Activated CD4-positive, alpha-beta T cell treated with anti-CD3 and anti-CD28 coated beads, Interleukin-2, amount 10 ng/mL, durations not matched to agents 24 days and 14 days (primary cell): ENCODE measurements at regions of chr7 and their contacts with region 1.

Region 1: DNA sequence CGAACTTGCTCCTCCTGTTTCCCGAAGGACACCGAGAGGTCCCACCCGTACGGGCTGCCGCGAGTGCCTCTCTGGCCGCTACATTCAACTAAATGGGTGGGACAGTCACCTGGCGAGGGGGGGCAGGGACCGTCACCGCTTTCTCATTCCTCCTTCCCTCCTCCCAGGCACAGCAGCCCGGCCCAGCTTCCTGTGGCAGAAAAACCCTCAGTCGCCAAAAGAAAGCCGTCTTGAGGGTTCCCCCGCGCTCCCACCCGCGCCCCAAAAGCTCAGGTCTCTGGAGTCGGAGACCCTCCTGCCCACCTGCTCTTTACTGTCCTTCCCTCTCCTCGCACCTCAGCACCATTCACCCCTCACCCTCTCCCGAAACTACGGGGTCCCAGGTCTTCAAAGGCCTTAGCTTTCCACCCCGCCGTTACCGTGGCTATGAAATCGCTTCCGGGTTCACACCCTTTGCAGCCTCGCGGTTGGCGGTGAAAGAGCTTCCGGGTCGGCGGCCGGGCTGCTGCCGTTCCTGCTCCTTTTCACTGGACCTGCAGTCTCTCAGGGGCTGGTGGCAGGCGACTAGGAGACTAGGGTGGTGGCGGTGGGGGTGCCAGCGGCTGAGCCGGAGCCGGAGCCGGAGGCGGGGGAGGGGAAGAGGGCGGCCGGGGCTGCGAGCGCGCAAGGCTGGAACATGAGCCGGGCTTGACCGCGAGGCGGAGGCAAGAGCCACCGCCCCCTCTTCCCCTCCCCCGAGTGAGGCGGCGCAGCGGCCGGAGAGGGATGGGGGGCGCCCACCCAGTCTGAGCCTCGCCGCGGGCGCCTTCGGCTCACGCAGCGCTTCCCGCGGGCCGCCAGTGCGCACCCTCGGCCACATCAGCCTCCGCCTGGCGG is at the starts of genes ANKIB1 and KRIT1:
- DNase-seq: peak; percentile 96
- H3K4me3 Mint-ChIP-seq: peak within 1 kb of the TSS; percentile 98
- H3K27ac Mint-ChIP-seq: peak within 1 kb of the TSS; percentile 99
- H3K4me1 Mint-ChIP-seq: peaks cover 32% of the 10 kb centered on the region
- H3K27me3 Mint-ChIP-seq: no peaks in the 10 kb centered on the region
- total RNA-seq, gene ANKIB1: 54.3 and 55.7 TPM in 2 replicates
- total RNA-seq, gene KRIT1: 47.3 and 49.2 TPM in 2 replicates

Region 2: GRCh38 chr7:91940572-91941341 is 305.0 kb before region 1 on chr7 and contains the start of gene AKAP9:
- intact Hi-C with region 1: loop called (anchors 2 kb)
- DNase-seq: peak; percentile 97
- H3K4me3 Mint-ChIP-seq: peak within 1 kb of the TSS; percentile 89
- H3K27ac Mint-ChIP-seq: peak within 1 kb of the TSS; percentile 88
- H3K4me1 Mint-ChIP-seq: peaks cover 23% of the 10 kb centered on the region
- H3K27me3 Mint-ChIP-seq: peaks cover 8% of the 10 kb centered on the region
- total RNA-seq, gene AKAP9: 36.0 and 38.2 TPM in 2 replicates

Region 3: GRCh38 chr7:92178927-92179924 is 66.5 kb before region 1 on chr7 and contains the start of gene LRRD1:
- intact Hi-C with region 1: loop called (anchors 2 kb)
- DNase-seq: peak; percentile 97
- H3K4me3 Mint-ChIP-seq: peak within 1 kb of the TSS; percentile 76
- H3K27ac Mint-ChIP-seq: no peak within 1 kb of the TSS
- H3K4me1 Mint-ChIP-seq: peaks cover 1% of the 10 kb centered on the region
- H3K27me3 Mint-ChIP-seq: peaks cover 32% of the 10 kb centered on the region
- total RNA-seq, gene LRRD1: not detected in 2 replicates

Region 4: GRCh38 chr7:92375013-92375412 is 129.3 kb after region 1 on chr7:
- intact Hi-C with region 1: no loop called
- DNase-seq: no peak
- H3K4me3 Mint-ChIP-seq: no peak overlapping the region
- H3K27ac Mint-ChIP-seq: no peak overlapping the region
- H3K4me1 Mint-ChIP-seq: no peaks in the 10 kb centered on the region
- H3K27me3 Mint-ChIP-seq: no peaks in the 10 kb centered on the region

Region 5: DNA sequence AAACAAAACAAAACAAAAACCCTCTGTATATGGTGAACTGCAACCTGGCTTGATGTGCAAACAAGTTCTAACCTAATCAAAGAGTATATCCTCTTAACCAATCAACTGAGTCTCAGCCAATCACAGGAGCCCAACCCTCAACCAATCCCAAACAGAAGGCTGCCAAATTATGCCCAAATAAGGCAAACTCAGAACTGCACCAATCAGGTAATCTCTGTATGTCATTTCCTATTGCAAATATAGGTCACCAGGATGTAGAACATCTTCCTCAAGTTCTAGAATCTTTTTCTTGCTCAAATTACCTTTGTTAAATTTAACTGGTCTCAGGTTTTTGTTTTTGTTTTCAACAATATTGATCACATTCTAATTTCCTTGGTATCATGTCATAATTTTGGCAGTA is 339.3 kb after region 1 on chr7:
- intact Hi-C with region 1: loop called (anchors 5 kb)
- DNase-seq: peak; percentile 61
- H3K4me3 Mint-ChIP-seq: no peak overlapping the region
- H3K27ac Mint-ChIP-seq: no peak overlapping the region
- H3K4me1 Mint-ChIP-seq: peaks cover 45% of the 10 kb centered on the region
- H3K27me3 Mint-ChIP-seq: no peaks in the 10 kb centered on the region